ENCODE measurements at regions of chr7 and their contacts with region 1.

Region 1: DNA sequence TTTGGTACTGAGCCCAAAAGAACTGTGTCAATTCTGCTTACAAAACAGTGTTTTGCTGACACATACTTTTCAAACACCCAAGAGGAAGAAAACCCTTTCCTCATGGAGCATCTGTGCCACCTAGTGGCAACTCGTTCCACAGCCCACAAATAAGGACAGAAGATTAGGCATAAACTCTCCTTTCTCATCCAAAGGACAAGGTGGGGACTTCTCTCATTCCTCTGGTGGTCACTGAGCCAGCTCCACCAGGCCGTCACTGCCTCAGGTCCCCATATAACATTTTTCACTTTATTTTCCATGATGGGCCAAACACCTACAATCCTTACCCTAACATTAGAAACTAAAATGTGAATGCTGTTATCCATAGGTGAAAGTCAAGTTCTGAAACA is 76.9 kb downstream of the RNF216 start:
- DNase-seq: peak; percentile 86
- ATAC-seq: no peak
- H3K4me3 Mint-ChIP-seq: no peak overlapping the region
- H3K27ac Mint-ChIP-seq: no peak overlapping the region
- H3K4me1 Mint-ChIP-seq: peaks cover 80% of the 10 kb centered on the region
- H3K27me3 Mint-ChIP-seq: no peaks in the 10 kb centered on the region

Region 2: GRCh38 chr7:5200561-5201270 is 503.8 kb before region 1 on chr7:
- CTCF ChIA-PET with region 1: no interaction called
- POLR2A ChIA-PET with region 1: no interaction called
- intact Hi-C with region 1: no loop called
- DNase-seq: no peak
- ATAC-seq: no peak
- H3K4me3 Mint-ChIP-seq: no peak overlapping the region
- H3K27ac Mint-ChIP-seq: no peak overlapping the region
- H3K4me1 Mint-ChIP-seq: peaks cover 3% of the 10 kb centered on the region
- H3K27me3 Mint-ChIP-seq: no peaks in the 10 kb centered on the region

Region 3: GRCh38 chr7:5557920-5558401 is 146.6 kb before region 1 on chr7:
- CTCF ChIA-PET with region 1: interaction called, 39 read pairs
- POLR2A ChIA-PET with region 1: no interaction called
- intact Hi-C with region 1: no loop called
- DNase-seq: peak; percentile 45
- ATAC-seq: no peak
- H3K4me3 Mint-ChIP-seq: peak overlapping the region; percentile 65
- H3K27ac Mint-ChIP-seq: peak overlapping the region; percentile 88
- H3K4me1 Mint-ChIP-seq: peaks cover 39% of the 10 kb centered on the region
- H3K27me3 Mint-ChIP-seq: peaks cover 2% of the 10 kb centered on the region

Region 4: DNA sequence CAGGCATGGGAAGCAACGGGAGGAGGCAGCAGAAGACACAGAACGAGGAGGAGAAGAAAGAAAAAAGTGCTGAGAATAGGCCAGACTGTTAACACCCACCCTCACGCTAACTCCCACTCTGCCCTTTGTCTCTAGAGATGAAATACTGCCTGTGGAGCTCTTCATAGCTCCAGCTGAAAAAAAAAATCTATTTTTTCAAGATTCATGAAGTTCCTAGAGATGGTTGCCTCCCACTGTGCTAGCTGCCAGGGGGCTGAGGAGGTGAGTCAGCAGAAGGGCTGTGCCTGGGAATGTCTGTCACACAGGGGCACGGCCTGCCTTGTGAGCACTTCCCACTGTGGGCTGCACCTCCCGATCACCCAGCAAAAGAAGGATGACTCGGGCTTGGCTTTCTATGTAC is 67.6 kb before region 1 on chr7:
- CTCF ChIA-PET with region 1: interaction called, 3 read pairs
- POLR2A ChIA-PET with region 1: no interaction called
- intact Hi-C with region 1: loop called (anchors 2 to 5 kb)
- DNase-seq: no peak
- ATAC-seq: no peak
- H3K4me3 Mint-ChIP-seq: no peak overlapping the region
- H3K27ac Mint-ChIP-seq: peak overlapping the region; percentile 29
- H3K4me1 Mint-ChIP-seq: peaks cover 16% of the 10 kb centered on the region
- H3K27me3 Mint-ChIP-seq: no peaks in the 10 kb centered on the region

Region 5: GRCh38 chr7:5677538-5678294 is 26.8 kb before region 1 on chr7:
- CTCF ChIA-PET with region 1: interaction called, 27 read pairs
- POLR2A ChIA-PET with region 1: interaction called, 3 read pairs
- intact Hi-C with region 1: loop called in 1 of 2 experiments (anchors 2 kb)
- DNase-seq: peak; percentile 73
- ATAC-seq: peak; percentile 63
- H3K4me3 Mint-ChIP-seq: no peak overlapping the region
- H3K27ac Mint-ChIP-seq: peak overlapping the region; percentile 27
- H3K4me1 Mint-ChIP-seq: peaks cover 44% of the 10 kb centered on the region
- H3K27me3 Mint-ChIP-seq: no peaks in the 10 kb centered on the region

Region 6: DNA sequence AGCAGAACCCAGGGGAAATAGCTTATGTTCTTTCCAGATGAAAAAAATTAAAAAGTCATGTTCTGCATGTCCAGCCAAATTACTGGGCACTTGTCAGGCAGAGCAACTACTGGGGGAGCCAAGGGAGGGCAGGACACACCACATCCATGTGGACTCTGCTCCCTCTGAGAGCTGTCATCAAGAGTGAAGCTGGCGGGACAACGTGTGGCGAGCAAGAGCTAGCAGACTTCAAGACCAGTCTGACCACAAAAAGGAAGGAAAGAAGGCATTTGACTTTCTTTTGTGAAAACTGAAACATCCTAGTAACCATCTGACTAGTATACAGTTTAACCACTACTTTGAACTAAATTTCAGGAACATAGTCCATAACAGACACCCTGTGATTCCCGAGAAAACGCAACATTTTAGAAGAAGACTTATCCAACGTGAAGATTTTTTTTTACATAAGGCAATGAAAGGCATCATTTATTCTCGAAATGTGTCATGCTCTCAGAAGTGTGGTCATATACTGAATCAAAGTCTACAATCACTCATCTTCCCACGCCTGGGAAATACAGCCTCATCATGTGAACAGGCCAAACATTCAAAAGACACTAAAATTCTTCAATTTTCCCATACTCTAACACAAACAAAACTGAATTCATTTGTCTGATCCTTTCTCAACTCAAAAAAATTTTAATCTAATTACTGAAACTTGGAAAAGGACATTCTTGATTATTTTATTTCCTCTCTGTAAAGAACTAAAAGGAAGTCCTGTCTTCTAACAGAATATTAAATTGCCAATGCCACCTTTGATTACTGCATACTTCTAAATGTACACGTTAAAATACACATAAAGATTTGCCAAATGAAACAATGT is 552.4 kb after region 1 on chr7:
- CTCF ChIA-PET with region 1: no interaction called
- POLR2A ChIA-PET with region 1: no interaction called
- intact Hi-C with region 1: loop called in 1 of 2 experiments (anchors 5 kb)
- DNase-seq: peak; percentile 79
- ATAC-seq: peak; percentile 90
- H3K4me3 Mint-ChIP-seq: no peak overlapping the region
- H3K27ac Mint-ChIP-seq: no peak overlapping the region
- H3K4me1 Mint-ChIP-seq: peaks cover 38% of the 10 kb centered on the region
- H3K27me3 Mint-ChIP-seq: peaks cover 13% of the 10 kb centered on the region

Region 7: GRCh38 chr7:6294839-6295238 is 590.3 kb after region 1 on chr7:
- CTCF ChIA-PET with region 1: no interaction called
- POLR2A ChIA-PET with region 1: no interaction called
- intact Hi-C with region 1: no loop called
- DNase-seq: no peak
- ATAC-seq: no peak
- H3K4me3 Mint-ChIP-seq: no peak overlapping the region
- H3K27ac Mint-ChIP-seq: no peak overlapping the region
- H3K4me1 Mint-ChIP-seq: peaks cover 6% of the 10 kb centered on the region
- H3K27me3 Mint-ChIP-seq: peaks cover 3% of the 10 kb centered on the region